CD8-positive, alpha-beta T cell (primary cell): ENCODE measurements at regions of chr5 and their contacts with region 1.

Region 1: DNA sequence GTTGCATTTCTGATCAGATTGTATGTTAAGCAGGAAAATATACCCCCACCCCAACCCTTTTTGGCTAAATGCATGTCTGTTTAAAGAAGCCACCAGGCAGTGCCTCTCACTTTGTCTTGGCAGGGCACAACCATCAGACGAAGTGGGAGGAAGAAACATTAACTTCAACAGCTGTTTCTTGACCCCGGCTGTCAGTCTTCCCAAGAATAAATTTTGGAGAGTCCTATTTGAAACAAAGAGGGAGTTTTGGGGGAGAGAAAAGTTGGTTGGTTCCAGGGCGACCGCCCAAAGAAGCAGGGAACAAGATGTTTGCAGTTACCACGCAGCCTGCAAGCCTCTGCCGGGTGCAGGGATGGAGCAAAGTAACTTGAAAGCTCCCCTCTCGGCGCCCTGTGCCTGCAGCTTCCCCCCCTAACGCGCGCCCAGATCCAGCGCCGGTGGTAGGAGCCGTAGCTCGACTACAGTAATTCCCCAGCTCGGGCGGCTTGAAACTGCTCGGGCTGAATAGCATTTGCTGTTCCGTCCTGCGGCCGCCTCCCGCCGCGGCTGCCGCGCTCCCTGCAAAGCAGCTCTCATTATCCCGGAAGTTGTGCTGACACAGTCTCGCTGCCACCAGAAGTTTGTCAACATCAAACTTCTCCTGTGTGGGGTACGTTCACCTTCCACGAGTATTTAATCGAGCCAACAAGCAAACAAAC is 100.7 kb upstream of the SSBP2 start:
- DNase-seq: peak; percentile 81 to 95 (median 90)
- ATAC-seq: peak; percentile 91
- H3K4me3 ChIP-seq: peak overlapping the region; percentile 63 to 68
- H3K4me3 Mint-ChIP-seq: peak overlapping the region; percentile 94
- H3K27ac ChIP-seq: peak overlapping the region; percentile 56 to 58
- H3K27ac Mint-ChIP-seq: peak overlapping the region; percentile 97
- H3K4me1 ChIP-seq: peaks cover 26% of the 10 kb centered on the region
- H3K4me1 Mint-ChIP-seq: peaks cover 51% of the 10 kb centered on the region
- H3K27me3 ChIP-seq: no peaks in the 10 kb centered on the region
- H3K27me3 Mint-ChIP-seq: no peaks in the 10 kb centered on the region
- CTCF ChIP-seq: no peak

Region 2: GRCh38 chr5:81425569-81425968 is 426.1 kb before region 1 on chr5:
- CTCF ChIA-PET with region 1: interaction called, 3 read pairs
- POLR2A ChIA-PET with region 1: no interaction called
- intact Hi-C with region 1: loop called in 1 of 2 experiments (anchors 5 kb)
- DNase-seq: peak in 2 of 9 experiments; percentile 42 to 57
- ATAC-seq: peak; percentile 49
- H3K4me3 ChIP-seq: no peak overlapping the region
- H3K4me3 Mint-ChIP-seq: no peak overlapping the region
- H3K27ac ChIP-seq: no peak overlapping the region
- H3K27ac Mint-ChIP-seq: no peak overlapping the region
- H3K4me1 ChIP-seq: no peaks in the 10 kb centered on the region
- H3K4me1 Mint-ChIP-seq: peaks cover 7% of the 10 kb centered on the region
- H3K27me3 ChIP-seq: no peaks in the 10 kb centered on the region
- H3K27me3 Mint-ChIP-seq: no peaks in the 10 kb centered on the region
- CTCF ChIP-seq: peak; percentile 71

Region 3: DNA sequence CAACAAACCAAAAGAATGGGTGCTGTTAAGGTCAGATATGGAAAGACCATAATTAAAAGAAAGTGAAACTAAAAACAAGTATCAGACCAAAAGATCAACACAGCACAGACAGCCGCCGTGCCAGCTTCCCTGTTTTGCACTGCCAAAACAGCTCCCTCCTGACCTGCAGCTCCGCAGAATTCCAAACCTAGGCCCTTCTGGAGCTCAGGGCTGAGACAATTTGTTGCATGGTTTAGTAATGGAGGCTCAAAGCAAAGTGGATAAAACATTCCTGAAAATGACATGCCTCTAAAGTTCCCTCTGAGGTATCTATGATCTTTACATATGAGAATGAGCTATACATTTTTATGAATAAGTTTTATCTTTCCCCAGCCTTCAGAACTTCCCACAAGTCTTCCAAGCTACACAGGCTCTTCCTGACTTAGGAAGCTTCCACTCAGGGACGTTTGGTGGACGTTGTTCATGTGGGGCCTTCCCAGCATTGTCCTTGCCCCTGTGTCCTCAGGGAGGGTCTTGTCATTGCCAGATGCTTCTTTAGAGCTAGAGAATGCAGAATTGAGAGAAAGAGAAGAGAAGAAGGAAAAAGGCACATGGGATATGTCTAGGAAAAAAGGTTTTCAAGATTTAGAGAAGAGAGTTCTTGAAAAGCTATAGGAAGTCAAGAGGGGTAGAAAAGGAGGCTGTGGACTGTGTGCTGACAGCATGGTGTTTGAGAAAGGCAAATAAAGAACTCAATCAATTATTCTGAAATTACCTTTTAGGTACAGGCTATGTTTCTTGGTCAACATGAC is 72.3 kb before region 1 on chr5:
- CTCF ChIA-PET with region 1: interaction called, 3 read pairs
- POLR2A ChIA-PET with region 1: interaction called, 14 read pairs
- intact Hi-C with region 1: no loop called
- DNase-seq: peak in 8 of 9 experiments; percentile 13 to 74 (median 42)
- ATAC-seq: peak; percentile 74
- H3K4me3 ChIP-seq: peak overlapping the region; percentile 47 to 55
- H3K4me3 Mint-ChIP-seq: peak overlapping the region; percentile 89
- H3K27ac ChIP-seq: peak overlapping the region; percentile 50 to 82
- H3K27ac Mint-ChIP-seq: peak overlapping the region; percentile 96
- H3K4me1 ChIP-seq: peaks cover 16% of the 10 kb centered on the region
- H3K4me1 Mint-ChIP-seq: peaks cover 24% of the 10 kb centered on the region
- H3K27me3 ChIP-seq: no peaks in the 10 kb centered on the region
- H3K27me3 Mint-ChIP-seq: no peaks in the 10 kb centered on the region
- CTCF ChIP-seq: no peak

Region 4: GRCh38 chr5:81838307-81838906 is 13.2 kb before region 1 on chr5:
- CTCF ChIA-PET with region 1: interaction called, 41 read pairs
- POLR2A ChIA-PET with region 1: interaction called, 10 read pairs
- intact Hi-C with region 1: no loop called
- DNase-seq: peak in 5 of 9 experiments; percentile 7 to 63 (median 36)
- ATAC-seq: peak; percentile 52
- H3K4me3 ChIP-seq: no peak overlapping the region
- H3K4me3 Mint-ChIP-seq: no peak overlapping the region
- H3K27ac ChIP-seq: no peak overlapping the region
- H3K27ac Mint-ChIP-seq: no peak overlapping the region
- H3K4me1 ChIP-seq: peaks cover 5% of the 10 kb centered on the region
- H3K4me1 Mint-ChIP-seq: peaks cover 5% of the 10 kb centered on the region
- H3K27me3 ChIP-seq: no peaks in the 10 kb centered on the region
- H3K27me3 Mint-ChIP-seq: no peaks in the 10 kb centered on the region
- CTCF ChIP-seq: peak; percentile 53

Region 5: GRCh38 chr5:81942746-81943145 is 91.1 kb after region 1 on chr5:
- CTCF ChIA-PET with region 1: no interaction called
- POLR2A ChIA-PET with region 1: no interaction called
- intact Hi-C with region 1: no loop called
- DNase-seq: no peak
- ATAC-seq: no peak
- H3K4me3 ChIP-seq: no peak overlapping the region
- H3K4me3 Mint-ChIP-seq: no peak overlapping the region
- H3K27ac ChIP-seq: no peak overlapping the region
- H3K27ac Mint-ChIP-seq: no peak overlapping the region
- H3K4me1 ChIP-seq: no peaks in the 10 kb centered on the region
- H3K4me1 Mint-ChIP-seq: no peaks in the 10 kb centered on the region
- H3K27me3 ChIP-seq: no peaks in the 10 kb centered on the region
- H3K27me3 Mint-ChIP-seq: no peaks in the 10 kb centered on the region
- CTCF ChIP-seq: no peak

Region 6: DNA sequence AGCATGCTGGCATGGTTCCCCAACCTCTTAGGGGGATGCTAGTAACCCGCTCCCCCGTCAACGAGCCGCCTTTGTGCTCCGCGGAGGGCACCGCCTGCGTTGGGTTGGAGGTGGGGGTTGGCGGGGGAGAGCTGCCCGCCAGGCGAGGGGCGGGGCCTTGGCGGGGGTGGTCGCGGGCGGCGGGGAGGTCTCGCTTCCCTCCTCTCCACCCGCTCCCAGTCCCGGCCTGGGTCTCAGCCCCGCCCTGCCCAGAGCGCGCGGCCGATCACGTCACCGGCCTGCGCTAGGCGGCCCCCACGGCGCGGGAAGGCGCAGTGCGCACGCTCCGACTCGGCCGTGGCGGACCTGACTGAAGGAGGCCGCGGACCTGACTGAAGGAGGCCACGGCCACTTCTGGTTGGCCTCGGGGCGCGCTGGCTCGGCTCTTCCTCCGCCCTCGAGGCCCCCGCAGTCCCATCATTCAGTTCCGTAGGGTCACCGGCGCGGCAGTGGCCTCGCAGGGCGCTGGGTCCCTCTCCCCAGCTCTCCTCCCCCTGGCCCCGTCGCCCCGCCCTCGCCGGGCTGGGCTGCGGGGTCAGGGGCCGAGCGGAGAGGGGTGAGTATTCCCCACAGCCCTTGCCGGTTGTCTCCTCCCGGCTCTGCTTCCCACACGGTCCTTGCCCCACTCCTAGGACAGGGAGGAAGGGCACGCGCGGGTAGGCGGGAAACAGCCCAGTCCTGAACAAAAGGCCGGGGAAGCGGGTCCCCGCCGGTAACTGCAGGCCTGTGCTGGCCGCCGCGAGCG is 120.3 kb after region 1 on chr5 and contains the start of gene ATG10:
- CTCF ChIA-PET with region 1: interaction called, 3 read pairs
- POLR2A ChIA-PET with region 1: interaction called, 10 read pairs
- intact Hi-C with region 1: loop called (anchors 1 to 5 kb)
- DNase-seq: peak; percentile 75 to 95 (median 86)
- ATAC-seq: peak; percentile 85
- H3K4me3 ChIP-seq: peak within 1 kb of the TSS; percentile 85 to 99
- H3K4me3 Mint-ChIP-seq: peak within 1 kb of the TSS; percentile 100
- H3K27ac ChIP-seq: peak within 1 kb of the TSS; percentile 96 to 97
- H3K27ac Mint-ChIP-seq: peak within 1 kb of the TSS; percentile 100
- H3K4me1 ChIP-seq: peaks cover 12% of the 10 kb centered on the region
- H3K4me1 Mint-ChIP-seq: peaks cover 31% of the 10 kb centered on the region
- H3K27me3 ChIP-seq: no peaks in the 10 kb centered on the region
- H3K27me3 Mint-ChIP-seq: no peaks in the 10 kb centered on the region
- CTCF ChIP-seq: no peak
- total RNA-seq, gene ATG10: 4.7 to 5.7 TPM

Region 7: DNA sequence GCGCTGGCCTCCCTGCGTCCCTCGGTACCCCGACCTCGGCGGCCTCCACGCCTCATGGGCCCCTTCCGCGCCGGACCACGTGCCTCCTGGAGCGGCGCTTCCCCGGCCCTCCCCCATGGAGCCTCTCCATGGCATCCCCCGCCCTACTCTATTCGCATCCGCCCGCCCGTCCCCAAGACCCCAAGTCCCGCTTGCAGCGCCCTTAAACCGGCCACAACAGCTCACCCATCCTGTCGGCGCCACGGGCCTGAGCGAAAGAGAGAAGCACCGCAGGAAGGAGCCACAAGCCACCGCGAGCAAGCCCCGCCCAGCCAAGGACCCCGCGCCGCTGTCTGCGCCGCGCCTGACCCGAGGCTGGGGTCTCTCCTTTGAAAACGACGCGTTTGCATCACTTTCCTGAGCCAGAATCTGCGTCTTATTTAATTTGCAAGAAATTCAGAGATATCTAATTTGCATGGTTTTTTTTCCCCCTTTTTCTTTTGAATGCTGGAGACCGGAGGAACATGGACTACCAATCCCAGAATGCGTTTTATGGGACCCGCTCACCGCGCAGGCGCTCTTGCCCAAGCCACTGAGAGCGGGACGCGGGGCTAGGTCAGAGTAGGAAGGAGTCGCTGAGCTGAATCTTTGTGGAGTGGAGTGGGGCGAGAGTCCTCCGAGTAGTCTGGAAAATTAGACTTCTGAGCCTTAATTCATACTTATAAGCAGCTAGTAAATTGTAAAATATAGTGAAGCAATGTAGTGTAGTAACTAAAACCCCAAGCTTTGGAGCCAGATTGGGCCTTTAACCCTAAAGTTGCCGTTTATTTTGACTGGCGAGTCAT is 426.7 kb after region 1 on chr5 and contains the start of gene RPS23:
- CTCF ChIA-PET with region 1: no interaction called
- POLR2A ChIA-PET with region 1: interaction called, 9 read pairs
- intact Hi-C with region 1: loop called (anchors 1 to 10 kb)
- DNase-seq: peak; percentile 73 to 94 (median 86)
- ATAC-seq: peak; percentile 95
- H3K4me3 ChIP-seq: peak within 1 kb of the TSS; percentile 63 to 94
- H3K4me3 Mint-ChIP-seq: peak within 1 kb of the TSS; percentile 97
- H3K27ac ChIP-seq: peak within 1 kb of the TSS; percentile 71 to 84
- H3K27ac Mint-ChIP-seq: peak within 1 kb of the TSS; percentile 96
- H3K4me1 ChIP-seq: peaks cover 18% of the 10 kb centered on the region
- H3K4me1 Mint-ChIP-seq: peaks cover 44% of the 10 kb centered on the region
- H3K27me3 ChIP-seq: no peaks in the 10 kb centered on the region
- H3K27me3 Mint-ChIP-seq: no peaks in the 10 kb centered on the region
- CTCF ChIP-seq: no peak
- total RNA-seq, gene RPS23: 3,866 to 4,021 TPM